ENCODE measurements at regions of chrX and their contacts with region 1.

Region 1: DNA sequence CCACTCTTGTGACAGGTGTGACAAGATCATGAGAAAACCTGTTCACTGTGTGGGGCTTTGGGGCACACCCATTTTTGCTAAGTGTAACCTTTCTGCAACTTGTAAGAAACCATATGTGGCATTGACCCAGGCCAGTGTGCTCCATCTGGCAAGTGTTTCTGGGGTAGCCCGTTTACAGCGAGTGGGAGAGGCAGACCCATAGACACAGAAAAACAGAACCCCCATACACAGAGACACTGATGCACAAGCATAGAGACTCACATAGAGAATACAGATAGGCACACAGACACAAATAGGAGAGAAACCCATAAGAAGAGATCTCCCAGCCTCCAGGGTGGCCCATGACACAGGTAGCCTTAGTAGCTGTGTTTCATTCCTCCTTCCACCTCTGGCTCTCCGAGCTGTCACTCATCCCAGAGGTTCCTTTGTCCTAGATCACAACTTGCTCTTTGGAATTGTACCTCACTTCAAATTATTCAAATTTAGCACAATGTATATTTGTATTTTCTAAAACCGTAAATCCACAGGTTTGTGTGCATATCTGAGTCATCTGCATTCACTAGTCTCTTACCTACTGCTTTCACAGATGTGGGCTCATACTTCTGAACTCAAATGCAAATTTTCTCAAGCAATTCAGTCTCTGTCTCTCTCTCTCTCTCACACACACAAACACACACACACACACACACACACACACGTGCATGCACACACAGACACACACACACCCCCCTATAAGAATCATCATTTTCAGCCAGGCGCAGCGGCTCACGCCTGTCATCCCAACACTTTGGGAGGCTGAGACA is 114.4 kb downstream of the SH3KBP1 start:
- DNase-seq: no peak
- ATAC-seq: peak; percentile 69
- H3K4me3 Mint-ChIP-seq: peak overlapping the region; percentile 57
- H3K27ac Mint-ChIP-seq: peak overlapping the region; percentile 89
- H3K4me1 Mint-ChIP-seq: peaks cover 74% of the 10 kb centered on the region
- H3K27me3 Mint-ChIP-seq: no peaks in the 10 kb centered on the region
- CTCF ChIP-seq: no peak

Region 2: GRCh38 chrX:19758539-19758938 is 14.5 kb before region 1 on chrX:
- CTCF ChIA-PET with region 1: interaction called, 5 read pairs
- POLR2A ChIA-PET with region 1: interaction called, 9 read pairs
- intact Hi-C with region 1: loop called (anchors 2 kb)
- DNase-seq: no peak
- ATAC-seq: peak; percentile 85
- H3K4me3 Mint-ChIP-seq: no peak overlapping the region
- H3K27ac Mint-ChIP-seq: peak overlapping the region; percentile 72
- H3K4me1 Mint-ChIP-seq: peaks cover 77% of the 10 kb centered on the region
- H3K27me3 Mint-ChIP-seq: no peaks in the 10 kb centered on the region
- CTCF ChIP-seq: no peak

Region 3: DNA sequence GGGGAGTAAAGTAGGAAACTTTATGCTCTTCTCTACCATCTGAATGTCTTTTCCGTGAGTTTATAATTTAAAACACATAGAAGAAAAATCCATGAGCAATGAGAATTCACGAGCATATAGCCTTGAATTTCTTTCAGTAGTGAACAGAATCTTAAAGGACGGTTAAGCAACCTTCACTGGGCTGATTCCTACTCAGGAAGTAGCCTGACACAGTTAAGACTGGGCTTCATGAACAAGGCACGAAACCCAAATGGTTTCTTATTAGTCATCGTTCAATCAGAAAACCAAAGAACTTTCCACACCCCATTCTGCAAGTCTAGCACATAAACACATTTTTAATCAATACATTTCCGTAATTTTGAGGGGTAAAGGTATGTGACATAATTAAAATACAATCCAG is 18.5 kb after region 1 on chrX:
- CTCF ChIA-PET with region 1: interaction called, 3 read pairs
- POLR2A ChIA-PET with region 1: no interaction called
- intact Hi-C with region 1: loop called (anchors 2 kb)
- DNase-seq: no peak
- ATAC-seq: peak; percentile 58
- H3K4me3 Mint-ChIP-seq: no peak overlapping the region
- H3K27ac Mint-ChIP-seq: peak overlapping the region; percentile 72
- H3K4me1 Mint-ChIP-seq: peaks cover 56% of the 10 kb centered on the region
- H3K27me3 Mint-ChIP-seq: no peaks in the 10 kb centered on the region
- CTCF ChIP-seq: no peak

Measured in activated B cell treated with CpG ODN at 0.5 μM for 24 hours (primary cell).